Sigmoid colon (tissue), 7 donors: ENCODE measurements at regions of chr5 and their contacts with region 1.

Region 1: GRCh38 chr5:138725138-138725833 is 27.9 kb upstream of the CTNNA1 start:
- DNase-seq: peak; percentile 89
- H3K4me3 ChIP-seq: peak overlapping the region in 2 of 4 donors; percentile 1 to 13
- H3K27ac ChIP-seq: peak overlapping the region; percentile 77 to 86 (median 84)
- H3K4me1 ChIP-seq: peaks cover 0 to 22% (median 20%) of the 10 kb centered on the region in 4 donors
- H3K27me3 ChIP-seq: no peaks in the 10 kb centered on the region
- CTCF ChIP-seq: no peak
- EP300 ChIP-seq: no peak
- POLR2A ChIP-seq: no peak

Region 2: DNA sequence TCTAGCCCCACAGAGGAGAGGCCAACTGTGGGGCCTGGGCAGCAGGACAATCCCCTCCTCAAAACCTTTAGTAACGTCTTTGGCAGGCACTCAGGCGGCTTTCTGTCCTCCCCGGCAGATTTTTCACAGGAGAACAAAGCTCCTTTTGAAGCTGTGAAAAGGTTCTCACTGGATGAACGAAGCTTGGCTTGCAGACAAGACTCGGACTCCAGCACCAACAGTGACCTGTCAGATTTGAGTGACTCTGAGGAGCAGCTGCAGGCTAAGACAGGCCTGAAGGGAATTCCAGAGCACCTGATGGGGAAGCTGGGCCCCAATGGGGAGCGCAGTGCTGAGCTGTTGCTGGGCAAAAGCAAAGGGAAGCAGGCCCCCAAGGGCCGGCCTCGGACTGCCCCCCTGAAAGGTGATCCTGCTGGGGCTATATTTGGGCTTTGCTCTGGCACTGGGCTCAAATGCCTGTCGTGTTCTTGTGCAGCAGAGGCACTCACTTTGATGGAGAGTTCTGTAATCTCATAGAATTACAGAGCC is 333.4 kb before region 1 on chr5:
- intact Hi-C with region 1: no loop called
- DNase-seq: no peak
- H3K4me3 ChIP-seq: no peak overlapping the region
- H3K27ac ChIP-seq: peak overlapping the region in 1 of 4 donors; percentile 70
- H3K4me1 ChIP-seq: no peaks in the 10 kb centered on the region
- H3K27me3 ChIP-seq: no peaks in the 10 kb centered on the region
- CTCF ChIP-seq: no peak
- EP300 ChIP-seq: no peak
- POLR2A ChIP-seq: no peak

Region 3: DNA sequence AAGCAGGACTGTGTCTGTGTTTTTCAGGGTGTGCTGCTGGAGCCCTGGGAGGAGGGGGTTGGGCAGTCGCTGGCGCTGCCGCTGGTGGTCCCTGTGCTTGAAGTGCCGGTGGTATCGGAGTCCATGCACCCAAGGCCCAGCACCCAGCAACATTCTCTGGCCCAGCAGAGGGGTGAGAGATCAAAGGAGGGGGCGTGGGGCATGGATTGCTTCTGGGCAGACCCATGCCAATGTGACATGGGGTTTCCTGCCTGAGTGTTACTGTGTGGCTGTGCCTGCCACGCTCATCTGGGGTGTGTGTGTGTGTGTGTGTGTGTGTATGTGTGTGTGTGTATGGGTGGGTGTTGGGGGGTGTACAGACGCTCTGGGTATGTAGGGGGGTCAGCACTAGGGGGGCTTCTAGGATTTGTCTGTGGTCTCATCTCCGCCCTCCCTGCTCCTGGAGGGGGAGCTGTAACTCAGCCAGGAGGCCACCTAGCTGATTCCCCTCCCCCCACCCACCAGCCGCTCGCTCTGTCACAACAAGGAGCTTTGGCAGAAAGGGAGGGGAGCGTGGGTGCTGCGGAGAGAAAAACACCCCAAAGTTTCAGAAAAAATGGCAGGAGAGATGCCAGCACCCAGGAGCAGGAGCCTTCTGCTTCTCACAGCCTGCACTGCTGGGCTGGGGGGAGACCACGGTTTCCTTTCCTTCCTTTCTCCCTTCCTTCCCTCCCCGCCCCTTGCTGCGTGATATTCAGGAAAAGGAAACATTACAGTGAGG is 114.2 kb before region 1 on chr5:
- intact Hi-C with region 1: loop called (anchors 10 kb)
- DNase-seq: peak; percentile 66
- H3K4me3 ChIP-seq: peak overlapping the region in 3 of 4 donors; percentile 29 to 52 (median 44)
- H3K27ac ChIP-seq: peak overlapping the region in 3 of 4 donors; percentile 66 to 74 (median 73)
- H3K4me1 ChIP-seq: peaks cover 0 to 32% (median 26%) of the 10 kb centered on the region in 4 donors
- H3K27me3 ChIP-seq: no peaks in the 10 kb centered on the region
- CTCF ChIP-seq: no peak
- EP300 ChIP-seq: no peak
- POLR2A ChIP-seq: no peak

Region 4: DNA sequence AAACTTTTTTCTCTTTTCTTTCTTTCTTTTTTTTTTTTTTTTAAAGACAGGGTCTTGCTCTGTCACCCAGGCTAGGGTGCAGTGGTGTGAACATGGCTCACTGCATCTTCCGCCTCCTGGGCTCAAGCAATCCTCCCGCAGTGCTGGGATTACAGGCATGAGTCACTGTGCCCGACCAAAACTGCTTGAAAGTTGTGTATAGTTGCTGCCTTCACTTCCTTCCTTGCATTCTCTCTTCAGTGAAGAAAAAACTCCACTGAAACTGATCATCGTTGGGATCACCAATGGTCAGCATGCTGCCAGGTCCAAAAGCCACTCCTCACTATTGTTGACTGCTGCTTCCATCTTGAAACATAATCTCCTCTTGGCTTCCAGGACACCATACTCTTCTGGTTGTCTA is 38.6 kb before region 1 on chr5:
- intact Hi-C with region 1: no loop called
- DNase-seq: no peak
- H3K4me3 ChIP-seq: no peak overlapping the region
- H3K27ac ChIP-seq: no peak overlapping the region
- H3K4me1 ChIP-seq: no peaks in the 10 kb centered on the region
- H3K27me3 ChIP-seq: no peaks in the 10 kb centered on the region
- CTCF ChIP-seq: no peak
- EP300 ChIP-seq: no peak
- POLR2A ChIP-seq: no peak

Region 5: DNA sequence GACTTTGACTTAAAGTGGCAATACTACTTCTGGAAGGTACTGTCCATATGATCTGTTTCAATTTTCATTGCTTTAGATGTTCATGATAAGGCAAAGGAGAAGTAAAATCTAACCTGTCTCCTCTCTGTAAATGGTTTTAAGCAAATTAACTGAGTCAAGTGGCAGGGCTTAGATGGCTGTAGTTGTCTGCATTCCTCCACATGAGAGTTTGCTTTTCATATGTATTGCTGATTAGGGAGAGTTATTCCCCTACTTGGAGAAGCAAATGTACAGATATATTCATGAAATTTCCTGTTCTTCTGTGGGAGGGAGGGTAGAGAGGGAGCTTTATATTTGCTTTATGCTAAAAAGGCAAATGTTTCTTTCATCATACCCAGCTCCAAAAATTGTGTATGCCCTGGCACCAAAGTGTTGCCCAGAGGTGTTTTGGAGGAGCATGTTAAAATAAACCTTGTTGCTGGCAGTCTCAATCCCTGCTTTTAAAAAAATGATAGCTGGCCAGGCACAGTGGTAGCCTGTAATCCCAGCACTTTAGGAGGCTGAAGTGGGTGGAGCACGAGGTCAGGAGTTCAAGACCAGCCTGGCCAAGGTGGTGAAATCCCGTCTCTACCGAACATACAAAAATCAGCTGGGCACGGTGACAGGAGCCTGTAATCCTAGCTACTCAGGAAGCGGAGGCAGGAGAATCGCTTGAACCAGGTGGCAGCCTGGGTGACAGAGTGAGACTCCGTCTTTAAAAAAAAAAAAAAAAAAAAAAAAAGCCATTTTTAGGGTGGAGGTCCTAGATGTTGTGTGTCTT is 153.3 kb after region 1 on chr5:
- intact Hi-C with region 1: no loop called
- DNase-seq: no peak
- H3K4me3 ChIP-seq: no peak overlapping the region
- H3K27ac ChIP-seq: no peak overlapping the region
- H3K4me1 ChIP-seq: peaks cover 0 to 34% (median 25%) of the 10 kb centered on the region in 4 donors
- H3K27me3 ChIP-seq: no peaks in the 10 kb centered on the region
- CTCF ChIP-seq: no peak
- EP300 ChIP-seq: no peak
- POLR2A ChIP-seq: no peak